Esophagus muscularis mucosa (tissue), 4 donors: ENCODE measurements at regions of chr3 and their contacts with region 1.

Region 1: DNA sequence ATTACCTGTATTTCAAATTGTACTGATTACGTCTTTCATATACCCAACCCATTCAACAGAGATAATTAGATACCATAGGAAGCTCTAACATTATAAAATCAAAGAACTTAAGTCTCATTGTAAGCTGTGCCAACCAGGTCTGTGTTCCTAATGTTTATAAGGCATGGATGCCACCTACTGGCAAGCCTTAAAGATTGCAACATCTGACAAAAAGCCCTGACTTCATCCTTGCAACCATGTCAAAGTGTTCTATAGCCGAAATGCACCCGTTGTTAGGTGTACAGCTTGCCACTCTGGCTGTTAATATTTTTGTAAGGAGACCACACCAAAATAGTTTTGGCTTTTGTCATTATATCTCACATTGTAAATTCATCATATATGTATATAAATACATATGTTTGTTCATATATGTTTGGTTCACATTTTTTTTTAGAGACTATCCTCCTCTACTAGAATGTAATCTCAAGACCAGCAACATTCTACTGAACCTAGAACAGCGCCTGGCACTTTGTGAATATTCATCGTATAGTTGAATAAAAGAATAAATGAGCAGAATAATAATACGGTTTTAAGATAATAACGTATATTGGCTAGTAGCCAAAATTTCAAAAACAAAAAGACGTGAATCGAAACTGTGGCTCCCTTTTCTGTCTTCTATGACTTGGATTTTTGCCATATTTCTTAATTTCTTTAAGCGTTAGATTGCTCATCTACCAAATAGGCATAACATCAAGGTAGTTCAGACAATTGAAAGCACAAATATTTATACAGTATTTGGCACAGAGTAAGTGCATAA is 258.1 kb downstream of the TBL1XR1 start:
- DNase-seq: no peak
- H3K4me3 ChIP-seq: no peak overlapping the region
- H3K27ac ChIP-seq: no peak overlapping the region
- H3K4me1 ChIP-seq: peaks cover 0 to 25% (median 12%) of the 10 kb centered on the region in 4 donors
- H3K27me3 ChIP-seq: no peaks in the 10 kb centered on the region
- CTCF ChIP-seq: peak; percentile 70 to 78 (median 75)
- EP300 ChIP-seq: no peak
- POLR2A ChIP-seq: no peak

Region 2: DNA sequence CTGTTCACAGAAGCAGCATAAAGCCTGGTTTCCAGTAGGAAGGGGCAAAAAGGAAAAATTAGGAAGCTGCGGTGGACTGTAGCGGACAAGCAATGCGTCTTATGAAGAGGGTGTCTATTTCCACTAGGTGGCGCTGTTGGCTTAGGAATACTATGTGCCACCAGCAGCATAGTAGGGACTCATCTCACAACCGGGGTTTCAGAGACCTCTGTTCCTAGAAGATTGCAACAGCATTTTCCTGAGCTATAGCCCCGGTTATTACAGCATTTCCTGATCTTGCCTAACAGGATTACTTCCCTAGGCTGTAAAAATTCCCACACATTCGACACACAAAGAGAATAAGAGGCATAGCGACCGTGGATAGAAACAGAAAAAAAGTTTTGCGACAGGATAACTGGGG is 424.9 kb before region 1 on chr3:
- intact Hi-C with region 1: loop called (anchors 5 kb)
- DNase-seq: no peak
- H3K4me3 ChIP-seq: no peak overlapping the region
- H3K27ac ChIP-seq: no peak overlapping the region
- H3K4me1 ChIP-seq: no peaks in the 10 kb centered on the region
- H3K27me3 ChIP-seq: no peaks in the 10 kb centered on the region
- CTCF ChIP-seq: peak; percentile 52 to 68 (median 60)
- EP300 ChIP-seq: no peak
- POLR2A ChIP-seq: no peak

Region 3: GRCh38 chr3:176579711-176580185 is 359.5 kb before region 1 on chr3:
- intact Hi-C with region 1: no loop called
- DNase-seq: no peak
- H3K4me3 ChIP-seq: no peak overlapping the region
- H3K27ac ChIP-seq: no peak overlapping the region
- H3K4me1 ChIP-seq: no peaks in the 10 kb centered on the region
- H3K27me3 ChIP-seq: no peaks in the 10 kb centered on the region
- CTCF ChIP-seq: no peak
- EP300 ChIP-seq: no peak
- POLR2A ChIP-seq: no peak

Region 4: DNA sequence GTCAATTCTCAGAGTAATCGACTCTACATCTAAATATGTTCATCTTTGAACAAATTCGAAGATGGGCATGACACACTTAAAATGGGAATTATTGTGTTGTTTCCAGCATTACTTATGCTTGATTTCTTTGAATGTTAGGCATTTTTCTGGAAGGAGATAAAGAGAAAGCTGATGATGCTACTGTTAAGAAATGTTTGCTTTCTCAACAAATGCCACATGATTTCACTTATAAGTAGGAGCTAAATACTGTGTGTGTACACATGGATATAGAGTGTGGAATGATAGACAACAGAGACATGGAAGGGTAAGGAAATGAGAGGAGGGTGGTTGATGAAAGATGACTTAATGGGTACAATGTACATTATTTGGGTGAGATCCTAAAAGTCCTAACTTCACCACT is 142.8 kb before region 1 on chr3:
- intact Hi-C with region 1: no loop called
- DNase-seq: no peak
- H3K4me3 ChIP-seq: no peak overlapping the region
- H3K27ac ChIP-seq: no peak overlapping the region
- H3K4me1 ChIP-seq: peaks cover 0 to 3% (median 0%) of the 10 kb centered on the region in 4 donors
- H3K27me3 ChIP-seq: no peaks in the 10 kb centered on the region
- CTCF ChIP-seq: no peak
- EP300 ChIP-seq: no peak
- POLR2A ChIP-seq: no peak

Region 5: GRCh38 chr3:176814285-176814684 is 124.9 kb before region 1 on chr3:
- intact Hi-C with region 1: no loop called
- DNase-seq: no peak
- H3K4me3 ChIP-seq: no peak overlapping the region
- H3K27ac ChIP-seq: no peak overlapping the region
- H3K4me1 ChIP-seq: no peaks in the 10 kb centered on the region
- H3K27me3 ChIP-seq: no peaks in the 10 kb centered on the region
- CTCF ChIP-seq: peak in 2 of 3 experiments; percentile 33 to 60
- EP300 ChIP-seq: no peak
- POLR2A ChIP-seq: no peak

Region 6: DNA sequence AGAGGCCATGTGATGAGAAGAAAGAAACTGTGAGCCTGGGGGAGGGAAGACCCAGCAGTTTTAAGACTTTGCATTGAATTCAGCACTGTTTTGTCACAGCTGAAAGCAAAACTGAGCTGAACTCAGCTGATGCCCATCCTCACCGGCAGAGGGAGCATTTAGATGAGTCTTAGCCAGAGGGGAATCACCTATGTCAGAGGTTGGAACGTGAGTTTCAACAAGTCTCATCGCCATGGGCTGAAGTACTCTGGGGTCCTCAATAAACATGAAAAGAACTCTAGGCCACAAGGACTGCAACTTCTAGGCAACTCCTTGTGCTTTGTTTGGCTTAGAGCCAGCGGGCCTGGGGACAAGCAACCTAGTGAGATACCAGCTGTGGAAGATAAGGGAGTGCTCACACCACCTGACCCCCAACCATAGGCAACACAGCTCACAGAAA is 66.4 kb before region 1 on chr3:
- intact Hi-C with region 1: loop called (anchors 2 kb)
- DNase-seq: no peak
- H3K4me3 ChIP-seq: no peak overlapping the region
- H3K27ac ChIP-seq: no peak overlapping the region
- H3K4me1 ChIP-seq: peaks cover 0 to 5% (median 0%) of the 10 kb centered on the region in 4 donors
- H3K27me3 ChIP-seq: no peaks in the 10 kb centered on the region
- CTCF ChIP-seq: peak; percentile 60 to 75 (median 62)
- EP300 ChIP-seq: no peak
- POLR2A ChIP-seq: no peak

Region 7: GRCh38 chr3:177013681-177014280 is 74.6 kb after region 1 on chr3:
- intact Hi-C with region 1: no loop called
- DNase-seq: no peak
- H3K4me3 ChIP-seq: no peak overlapping the region
- H3K27ac ChIP-seq: no peak overlapping the region
- H3K4me1 ChIP-seq: no peaks in the 10 kb centered on the region
- H3K27me3 ChIP-seq: no peaks in the 10 kb centered on the region
- CTCF ChIP-seq: no peak
- EP300 ChIP-seq: no peak
- POLR2A ChIP-seq: no peak